ENCODE measurements at regions of chr11 and their contacts with region 1.

Region 1: DNA sequence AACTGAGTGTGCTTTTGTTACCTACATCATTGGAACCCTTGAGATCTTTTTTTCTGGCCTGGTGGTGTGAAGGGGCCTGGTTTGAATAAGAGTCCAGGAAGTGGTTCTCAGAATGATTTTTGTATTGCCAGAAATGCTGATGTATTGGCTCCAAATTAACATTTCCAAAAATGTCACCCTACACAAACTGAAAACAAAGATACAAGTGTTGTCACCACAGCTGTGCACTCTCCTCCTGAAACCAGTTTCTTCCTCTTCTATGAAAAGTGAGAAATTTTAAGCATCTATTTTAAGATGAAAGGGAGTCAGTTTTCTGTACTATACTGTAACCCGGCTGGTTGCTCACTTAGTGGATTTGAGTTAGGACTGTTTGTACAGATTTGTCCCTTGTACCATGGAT is 218.8 kb downstream of the PGR start:
- DNase-seq: no peak
- H3K4me3 ChIP-seq: no peak overlapping the region
- CTCF ChIP-seq: no peak

Region 2: GRCh38 chr11:100841711-100842407 is 68.9 kb before region 1 on chr11:
- CTCF ChIA-PET with region 1: no interaction called
- POLR2A ChIA-PET with region 1: no interaction called
- DNase-seq: no peak
- H3K4me3 ChIP-seq: no peak overlapping the region
- CTCF ChIP-seq: no peak

Region 3: DNA sequence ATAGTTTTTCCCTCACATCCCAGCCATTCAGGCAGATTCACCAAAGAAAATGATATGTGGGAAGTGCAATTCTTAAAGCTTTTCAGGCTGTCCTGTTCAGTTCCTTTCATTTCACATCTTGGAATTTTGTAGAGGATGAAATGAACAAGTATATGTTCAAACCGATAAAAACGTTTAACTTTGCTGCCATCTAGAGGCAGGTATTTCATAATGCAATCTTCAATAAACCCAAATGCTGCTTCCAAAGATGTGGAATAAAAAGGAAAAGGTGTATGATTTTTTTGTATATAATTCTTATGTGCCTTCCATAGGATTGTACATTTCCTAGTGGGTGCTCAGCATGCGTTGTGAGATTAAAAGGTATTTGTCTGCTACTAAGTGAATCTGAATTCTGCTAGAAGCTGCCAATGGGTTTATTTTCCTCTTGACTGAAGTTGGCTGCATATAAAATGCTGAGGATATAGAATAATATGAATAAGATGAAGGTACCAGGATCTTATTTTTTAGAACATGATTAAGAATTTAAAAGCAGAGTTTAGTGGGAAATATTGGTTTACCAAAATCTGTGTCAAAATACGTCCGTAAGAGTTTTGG is 19.5 kb after region 1 on chr11:
- CTCF ChIA-PET with region 1: interaction called, 11 read pairs
- POLR2A ChIA-PET with region 1: no interaction called
- DNase-seq: peak; percentile 29
- H3K4me3 ChIP-seq: no peak overlapping the region
- CTCF ChIP-seq: no peak